Transverse colon (tissue), 4 donors: ENCODE measurements at regions of chr9 and their contacts with region 1.

Region 1: DNA sequence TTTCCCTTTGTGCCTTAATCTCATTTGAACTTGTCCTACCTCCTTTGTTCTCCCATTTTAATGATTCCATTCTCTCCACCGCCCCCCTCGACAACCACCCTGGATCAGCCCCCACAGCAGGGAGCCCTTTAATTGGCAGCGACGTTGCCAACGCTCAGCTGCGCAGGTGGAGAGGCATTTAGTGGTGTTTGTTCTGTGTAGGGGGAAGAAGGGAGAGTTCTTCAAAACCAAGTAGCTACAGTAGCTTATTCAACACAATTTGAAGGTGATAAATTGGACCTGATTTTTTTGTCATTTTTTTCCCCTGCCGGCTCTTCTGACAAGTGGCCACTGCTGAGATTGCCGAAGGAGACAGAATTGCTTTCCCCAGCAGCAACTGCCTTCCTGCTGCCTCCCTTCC is 499.1 kb downstream of the CDK5RAP2 start:
- DNase-seq: no peak
- H3K4me3 ChIP-seq: no peak overlapping the region
- H3K27ac ChIP-seq: no peak overlapping the region
- H3K4me1 ChIP-seq: no peaks in the 10 kb centered on the region
- H3K27me3 ChIP-seq: no peaks in the 10 kb centered on the region
- CTCF ChIP-seq: no peak
- EP300 ChIP-seq: no peak
- POLR2A ChIP-seq: no peak

Region 2: DNA sequence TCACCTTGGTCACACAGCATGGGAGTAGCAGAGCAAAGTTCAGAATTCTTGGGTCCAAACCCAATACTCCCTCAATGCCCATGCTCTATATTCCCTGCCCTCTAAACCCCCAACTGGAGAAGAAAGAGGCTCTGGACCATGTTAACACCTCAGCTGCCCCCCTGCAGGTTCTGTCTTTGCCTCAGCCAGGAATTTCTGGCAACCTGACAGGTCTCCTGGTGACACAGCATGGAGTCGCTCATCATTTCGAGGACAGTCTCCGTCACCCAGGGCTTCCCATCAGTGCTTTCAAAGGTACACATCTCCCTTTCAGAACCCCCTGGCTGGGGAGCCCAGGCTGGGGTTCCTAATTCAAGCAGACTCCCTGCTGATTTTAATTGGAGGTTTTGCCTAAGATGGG is 901.1 kb before region 1 on chr9:
- in situ Hi-C with region 1: no loop called
- intact Hi-C with region 1: no loop called
- DNase-seq: no peak
- H3K4me3 ChIP-seq: no peak overlapping the region
- H3K27ac ChIP-seq: no peak overlapping the region
- H3K4me1 ChIP-seq: no peaks in the 10 kb centered on the region
- H3K27me3 ChIP-seq: no peaks in the 10 kb centered on the region
- CTCF ChIP-seq: no peak
- EP300 ChIP-seq: no peak
- POLR2A ChIP-seq: no peak

Region 3: DNA sequence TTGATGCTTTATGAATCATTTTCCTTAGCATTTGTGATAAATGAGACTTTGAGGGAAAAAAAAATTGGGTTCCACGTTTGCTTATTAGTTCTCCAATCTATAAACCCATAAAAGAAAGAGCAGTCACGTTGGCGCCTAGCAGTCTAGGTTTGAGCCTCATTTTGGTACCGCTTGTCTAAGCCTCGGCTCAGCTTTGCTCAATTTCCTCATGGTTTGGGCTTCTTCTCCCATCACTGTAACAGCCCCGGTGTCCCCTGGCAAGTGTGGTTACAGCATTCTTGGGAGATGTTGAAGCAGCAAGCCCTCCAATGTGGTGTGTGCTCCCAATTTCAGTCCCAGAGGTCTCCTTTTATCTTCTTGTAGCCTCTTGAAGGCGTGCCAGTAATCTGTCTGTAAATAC is 79.3 kb before region 1 on chr9:
- in situ Hi-C with region 1: no loop called
- intact Hi-C with region 1: loop called (anchors 10 kb)
- DNase-seq: no peak
- H3K4me3 ChIP-seq: no peak overlapping the region
- H3K27ac ChIP-seq: no peak overlapping the region
- H3K4me1 ChIP-seq: no peaks in the 10 kb centered on the region
- H3K27me3 ChIP-seq: no peaks in the 10 kb centered on the region
- CTCF ChIP-seq: no peak
- EP300 ChIP-seq: no peak
- POLR2A ChIP-seq: no peak

Region 4: DNA sequence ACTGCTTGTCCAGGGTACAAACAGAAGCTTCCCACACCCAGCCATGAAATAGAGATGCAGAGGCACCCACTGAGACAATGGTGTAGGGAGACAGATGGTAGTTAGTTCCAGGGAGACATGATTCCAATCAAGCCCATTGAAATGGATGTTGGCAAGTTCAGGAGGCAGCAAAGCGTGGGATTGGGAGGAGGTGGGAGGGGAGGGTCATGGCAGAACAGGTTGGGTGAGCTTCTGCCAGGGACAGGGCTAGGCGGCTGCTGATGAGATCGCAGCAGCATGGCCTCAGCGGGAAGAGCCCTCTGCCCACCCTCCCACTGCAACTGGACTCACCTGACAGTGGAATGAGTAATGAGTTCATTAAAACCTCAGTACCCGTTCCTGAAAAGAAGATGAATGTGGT is 80.9 kb after region 1 on chr9:
- in situ Hi-C with region 1: no loop called
- intact Hi-C with region 1: no loop called
- DNase-seq: no peak
- H3K4me3 ChIP-seq: no peak overlapping the region
- H3K27ac ChIP-seq: no peak overlapping the region
- H3K4me1 ChIP-seq: no peaks in the 10 kb centered on the region
- H3K27me3 ChIP-seq: no peaks in the 10 kb centered on the region
- CTCF ChIP-seq: no peak
- EP300 ChIP-seq: no peak
- POLR2A ChIP-seq: no peak